Activated naive CD4-positive, alpha-beta T cell treated with anti-CD3 and anti-CD28 coated beads for 36 hours (primary cell): ENCODE measurements at regions of chr6 and their contacts with region 1.

Region 1: DNA sequence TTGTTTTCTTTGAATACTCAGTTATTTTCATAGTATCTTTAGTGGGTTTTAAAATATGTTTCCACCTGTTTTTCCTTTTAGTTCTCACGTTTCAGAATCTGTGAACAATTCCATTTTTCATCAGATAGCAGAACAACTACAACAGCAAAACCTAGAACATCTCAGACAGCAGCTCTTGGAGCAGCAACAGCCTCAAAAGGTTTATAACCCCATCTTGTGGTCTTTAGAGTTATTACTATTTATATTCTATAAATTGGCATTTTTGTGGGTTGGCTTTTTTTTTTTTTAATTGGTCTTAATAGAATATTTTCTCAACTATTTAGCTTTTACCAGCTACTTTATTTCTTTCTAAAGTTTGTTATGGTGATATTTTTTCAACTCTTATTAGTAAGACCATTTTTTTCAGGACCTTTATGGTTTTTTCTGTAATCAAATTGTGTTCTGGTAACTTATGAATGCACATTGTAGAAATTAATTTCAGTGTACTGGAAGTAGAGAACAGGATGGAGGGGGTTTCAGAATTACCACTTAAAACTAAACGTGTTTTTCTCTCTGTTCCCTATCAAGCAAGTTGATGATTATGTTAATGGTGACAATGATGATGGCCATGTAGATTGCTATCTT is 72.2 kb downstream of the SCAF8 start:
- DNase-seq: no peak
- H3K4me3 Mint-ChIP-seq: no peak overlapping the region
- H3K27ac Mint-ChIP-seq: no peak overlapping the region
- H3K4me1 Mint-ChIP-seq: peaks cover 6% of the 10 kb centered on the region
- H3K27me3 Mint-ChIP-seq: no peaks in the 10 kb centered on the region

Region 2: DNA sequence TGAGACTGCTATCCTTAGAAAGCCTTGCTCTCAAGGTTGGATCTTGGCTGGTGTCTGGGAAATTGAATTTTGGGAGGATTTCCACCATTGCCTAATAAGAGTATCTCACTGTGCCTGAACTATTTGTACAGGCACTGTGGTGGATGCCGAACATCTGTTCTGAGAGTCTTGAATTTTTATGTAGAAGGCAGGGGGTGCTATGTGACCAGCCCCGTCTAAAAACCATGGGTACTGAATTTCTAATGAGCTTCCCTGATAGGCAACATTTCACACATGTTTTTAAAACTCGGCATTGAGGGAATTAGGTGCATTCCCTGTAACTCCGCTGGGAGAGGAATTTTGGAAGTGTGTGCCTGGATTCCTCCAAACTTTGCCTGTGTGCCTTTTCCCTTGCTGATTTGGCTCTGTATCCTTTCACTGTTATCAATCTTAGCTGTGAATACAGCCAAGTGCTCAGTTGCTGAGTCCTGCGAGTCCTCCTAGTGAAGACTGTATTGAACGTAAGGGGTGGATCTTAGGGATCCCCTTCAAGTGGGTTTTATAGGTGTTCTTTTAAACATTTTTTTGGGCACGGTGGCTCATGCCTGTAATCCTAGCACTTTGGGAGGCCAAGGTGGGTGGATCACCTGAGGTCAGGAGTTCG is 99.8 kb before region 1 on chr6:
- CTCF ChIA-PET with region 1: interaction called, 5 read pairs
- intact Hi-C with region 1: loop called (anchors 1 kb)
- DNase-seq: peak; percentile 20
- H3K4me3 Mint-ChIP-seq: no peak overlapping the region
- H3K27ac Mint-ChIP-seq: no peak overlapping the region
- H3K4me1 Mint-ChIP-seq: no peaks in the 10 kb centered on the region
- H3K27me3 Mint-ChIP-seq: no peaks in the 10 kb centered on the region